PC-9 (cell line): ENCODE measurements at regions of chr10 and their contacts with region 1.

Region 1: DNA sequence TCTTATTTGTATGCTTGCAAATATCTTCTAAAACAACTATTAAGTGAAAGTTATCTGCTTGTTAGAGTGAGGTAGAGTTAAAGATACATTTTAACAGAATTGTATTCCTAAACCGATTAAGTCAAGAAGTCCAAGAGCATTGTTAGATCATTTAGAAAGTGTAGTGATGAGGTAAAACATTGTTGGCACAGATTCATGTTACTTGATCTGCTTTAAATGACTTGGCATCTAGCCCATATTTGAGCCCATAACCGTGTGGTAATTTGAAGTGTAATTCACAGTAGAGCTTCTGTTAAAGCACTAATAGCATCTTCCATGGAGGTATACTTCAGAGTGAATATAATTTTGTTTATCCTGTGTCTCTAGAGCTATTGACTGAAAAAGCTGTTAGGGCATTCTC is 62.1 kb downstream of the PTEN start:
- DNase-seq: no peak
- H3K4me3 ChIP-seq: no peak overlapping the region
- H3K27ac ChIP-seq: no peak overlapping the region
- H3K4me1 ChIP-seq: no peaks in the 10 kb centered on the region
- H3K27me3 ChIP-seq: no peaks in the 10 kb centered on the region
- CTCF ChIP-seq: no peak

Region 2: DNA sequence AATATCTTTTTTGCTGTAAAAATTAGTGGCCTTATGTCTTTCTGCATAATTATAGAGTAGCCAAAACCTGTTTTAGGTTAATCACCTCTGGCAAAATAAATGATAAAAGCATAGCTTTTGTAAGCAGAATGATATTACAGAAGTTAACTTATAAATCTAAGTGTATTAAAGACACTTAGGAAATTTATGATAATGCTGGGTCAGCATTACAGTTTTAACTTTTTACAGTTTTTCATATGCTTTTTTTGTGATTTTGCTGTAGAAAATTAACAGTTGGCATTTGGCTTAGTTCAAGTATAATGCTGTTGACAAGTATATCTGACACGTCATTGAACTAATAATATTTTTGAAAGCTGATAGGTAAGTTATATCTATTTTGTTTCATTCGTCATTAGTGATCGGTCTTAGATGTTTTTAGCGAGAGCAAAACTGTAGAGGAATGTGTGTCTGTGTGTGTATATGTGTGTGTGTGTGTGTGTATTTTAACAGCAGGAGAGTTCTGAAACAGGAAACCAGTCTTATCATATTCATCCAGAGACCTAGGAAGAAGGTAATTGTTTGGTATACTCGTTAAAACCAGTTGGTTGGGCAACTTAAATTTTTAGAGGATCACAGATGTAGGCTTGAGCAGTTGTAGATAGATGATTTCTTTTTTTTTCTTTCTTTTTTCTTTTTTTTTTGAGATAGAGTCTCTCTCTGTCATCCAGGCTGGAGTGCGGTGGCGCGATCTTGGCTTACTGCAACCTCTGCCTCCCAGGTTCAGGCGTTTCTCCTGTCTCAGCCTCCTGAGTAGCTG is 46.7 kb before region 1 on chr10:
- CTCF ChIA-PET with region 1: no interaction called
- POLR2A ChIA-PET with region 1: no interaction called
- intact Hi-C with region 1: loop called (anchors 10 kb)
- DNase-seq: no peak
- H3K4me3 ChIP-seq: no peak overlapping the region
- H3K27ac ChIP-seq: no peak overlapping the region
- H3K4me1 ChIP-seq: no peaks in the 10 kb centered on the region
- H3K27me3 ChIP-seq: no peaks in the 10 kb centered on the region
- CTCF ChIP-seq: no peak

Region 3: DNA sequence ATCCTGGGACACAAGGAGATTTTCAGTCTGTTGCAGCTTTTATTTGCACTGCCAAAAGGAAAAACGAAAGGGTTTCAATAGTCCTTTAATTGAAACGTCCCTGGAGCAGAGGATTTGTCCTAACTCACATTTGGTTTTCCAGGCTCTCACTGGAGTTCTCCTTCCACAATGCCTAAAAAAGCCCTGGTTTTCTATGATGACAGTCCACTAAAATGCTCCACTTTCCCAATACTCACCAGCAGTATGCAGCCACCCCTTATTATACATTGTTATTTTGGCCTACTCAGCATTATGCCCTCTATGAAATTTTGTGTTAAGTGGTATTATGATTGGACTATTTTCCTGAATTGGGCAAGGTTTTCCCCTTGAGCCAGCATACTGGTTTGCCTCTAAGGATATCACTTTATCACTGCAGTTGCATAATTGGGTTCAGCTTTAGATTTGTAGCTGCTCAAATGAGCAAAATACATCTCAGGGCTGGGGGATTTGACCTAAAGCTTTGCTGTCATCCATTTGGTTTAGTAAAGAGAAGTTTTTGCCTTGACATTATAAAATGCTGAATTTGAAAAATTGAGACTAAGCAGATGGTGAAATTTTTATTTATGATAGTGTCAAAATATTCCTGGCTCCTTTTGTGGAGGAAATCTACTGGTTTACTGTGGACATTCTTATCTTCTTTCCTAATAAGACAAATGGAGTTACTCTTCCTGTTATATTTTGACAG is 418.4 kb after region 1 on chr10:
- CTCF ChIA-PET with region 1: no interaction called
- POLR2A ChIA-PET with region 1: interaction called, 15 read pairs
- intact Hi-C with region 1: no loop called
- DNase-seq: no peak
- H3K4me3 ChIP-seq: no peak overlapping the region
- H3K27ac ChIP-seq: no peak overlapping the region
- H3K4me1 ChIP-seq: no peaks in the 10 kb centered on the region
- H3K27me3 ChIP-seq: no peaks in the 10 kb centered on the region
- CTCF ChIP-seq: no peak